Sigmoid colon (tissue), 7 donors: ENCODE measurements at regions of chr1 and their contacts with region 1.

Region 1: DNA sequence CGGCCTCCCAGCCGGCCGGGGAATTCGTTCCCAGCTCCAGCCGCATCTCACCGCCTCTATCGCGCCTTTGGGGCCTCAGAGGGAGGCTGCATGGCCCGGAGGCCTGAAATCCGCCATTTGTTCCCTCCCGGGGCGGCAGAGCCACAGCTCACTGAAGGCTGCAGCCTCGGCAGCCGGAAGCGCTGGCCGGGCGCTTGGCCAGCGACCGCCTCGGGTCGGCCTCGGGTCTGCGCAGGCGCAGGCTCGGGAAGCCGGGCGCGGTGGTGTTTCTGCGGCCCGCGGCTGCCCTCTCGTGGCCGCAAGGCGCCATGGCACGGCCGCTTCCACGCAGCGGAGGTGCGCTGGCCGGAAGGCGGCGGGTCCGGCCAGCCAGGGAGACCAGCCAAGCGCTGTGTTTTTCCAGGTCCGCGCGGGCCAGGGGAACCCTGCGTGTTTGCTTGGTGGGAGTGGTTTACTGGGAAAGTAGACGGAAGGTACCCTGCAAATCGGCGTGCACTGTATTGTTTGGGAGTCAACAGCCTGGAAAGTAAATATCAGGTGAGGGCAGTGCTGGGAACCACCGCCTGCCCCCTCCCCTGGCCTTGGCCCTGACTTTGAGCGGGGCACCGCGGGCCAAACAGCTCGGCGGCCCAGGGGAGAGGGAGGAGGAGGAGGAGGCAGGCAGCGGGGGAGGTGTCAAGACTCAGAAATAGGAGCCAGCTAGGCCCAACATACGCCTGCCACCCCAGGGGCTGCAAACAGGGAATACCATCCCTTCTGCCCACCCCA is 52.7 kb upstream of the CD34 start:
- DNase-seq: peak; percentile 94
- H3K4me3 ChIP-seq: peak overlapping the region; percentile 47 to 65 (median 60)
- H3K27ac ChIP-seq: peak overlapping the region; percentile 90 to 96 (median 93)
- H3K4me1 ChIP-seq: peaks cover 0 to 40% (median 34%) of the 10 kb centered on the region in 4 donors
- H3K27me3 ChIP-seq: no peaks in the 10 kb centered on the region
- CTCF ChIP-seq: peak; percentile 87 to 99 (median 94)
- EP300 ChIP-seq: peak in 2 of 4 donors; percentile 13 to 49
- POLR2A ChIP-seq: peak; percentile 81 to 82

Region 2: GRCh38 chr1:207052911-207053769 is 910.5 kb before region 1 on chr1 and contains the start of gene PFKFB2:
- intact Hi-C with region 1: loop called (anchors 5 kb)
- DNase-seq: peak; percentile 98
- H3K4me3 ChIP-seq: peak within 1 kb of the TSS; percentile 48 to 66 (median 59)
- H3K27ac ChIP-seq: peak within 1 kb of the TSS; percentile 87 to 95 (median 90)
- H3K4me1 ChIP-seq: peaks cover 0 to 32% (median 30%) of the 10 kb centered on the region in 4 donors
- H3K27me3 ChIP-seq: no peaks in the 10 kb centered on the region
- CTCF ChIP-seq: peak in 3 of 4 experiments; percentile 12 to 51 (median 42)
- EP300 ChIP-seq: no peak
- POLR2A ChIP-seq: peak; percentile 62 to 88
- total RNA-seq, gene PFKFB2: 5.0 to 7.8 (median 5.5) TPM

Region 3: DNA sequence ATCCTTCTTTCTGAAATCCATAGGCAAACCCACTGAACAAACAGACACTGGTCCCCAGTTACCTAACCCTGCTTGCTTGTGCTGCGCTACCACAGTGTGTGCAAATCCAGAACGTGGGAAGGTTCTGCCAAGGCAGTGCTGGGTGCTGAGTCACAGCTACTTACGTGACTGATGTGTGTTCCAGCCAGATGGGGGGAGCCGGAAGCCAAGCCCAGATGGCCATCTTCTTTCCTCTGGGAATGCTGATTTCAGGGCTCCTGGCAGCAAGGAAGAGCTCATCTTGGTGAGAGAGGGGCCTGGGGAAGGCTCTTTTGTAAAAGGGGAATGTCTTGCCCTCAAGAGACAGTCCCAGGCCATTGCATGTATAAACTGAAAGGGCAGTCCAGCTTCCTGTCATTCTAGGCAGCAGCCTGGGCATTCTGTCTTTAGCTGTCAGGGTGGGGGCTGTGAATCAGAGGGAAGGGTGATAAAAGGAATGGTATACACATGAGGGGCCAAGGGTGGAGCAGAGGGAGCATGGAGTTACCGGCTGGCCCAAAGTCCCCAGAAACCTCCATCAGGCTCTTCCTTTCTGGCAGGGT is 157.7 kb before region 1 on chr1:
- intact Hi-C with region 1: loop called (anchors 5 kb)
- DNase-seq: peak; percentile 96
- H3K4me3 ChIP-seq: no peak overlapping the region
- H3K27ac ChIP-seq: peak overlapping the region; percentile 77 to 99 (median 82)
- H3K4me1 ChIP-seq: peaks cover 0 to 76% (median 68%) of the 10 kb centered on the region in 4 donors
- H3K27me3 ChIP-seq: no peaks in the 10 kb centered on the region
- CTCF ChIP-seq: no peak
- EP300 ChIP-seq: peak in 1 of 4 donors; percentile 29
- POLR2A ChIP-seq: no peak

Region 4: GRCh38 chr1:207828485-207829158 is 135.0 kb before region 1 on chr1:
- intact Hi-C with region 1: loop called (anchors 2 kb)
- DNase-seq: peak; percentile 91
- H3K4me3 ChIP-seq: no peak overlapping the region
- H3K27ac ChIP-seq: peak overlapping the region; percentile 91 to 99 (median 94)
- H3K4me1 ChIP-seq: peaks cover 0 to 94% (median 88%) of the 10 kb centered on the region in 4 donors
- H3K27me3 ChIP-seq: no peaks in the 10 kb centered on the region
- CTCF ChIP-seq: peak; percentile 86 to 97 (median 92)
- EP300 ChIP-seq: no peak
- POLR2A ChIP-seq: no peak

Region 5: DNA sequence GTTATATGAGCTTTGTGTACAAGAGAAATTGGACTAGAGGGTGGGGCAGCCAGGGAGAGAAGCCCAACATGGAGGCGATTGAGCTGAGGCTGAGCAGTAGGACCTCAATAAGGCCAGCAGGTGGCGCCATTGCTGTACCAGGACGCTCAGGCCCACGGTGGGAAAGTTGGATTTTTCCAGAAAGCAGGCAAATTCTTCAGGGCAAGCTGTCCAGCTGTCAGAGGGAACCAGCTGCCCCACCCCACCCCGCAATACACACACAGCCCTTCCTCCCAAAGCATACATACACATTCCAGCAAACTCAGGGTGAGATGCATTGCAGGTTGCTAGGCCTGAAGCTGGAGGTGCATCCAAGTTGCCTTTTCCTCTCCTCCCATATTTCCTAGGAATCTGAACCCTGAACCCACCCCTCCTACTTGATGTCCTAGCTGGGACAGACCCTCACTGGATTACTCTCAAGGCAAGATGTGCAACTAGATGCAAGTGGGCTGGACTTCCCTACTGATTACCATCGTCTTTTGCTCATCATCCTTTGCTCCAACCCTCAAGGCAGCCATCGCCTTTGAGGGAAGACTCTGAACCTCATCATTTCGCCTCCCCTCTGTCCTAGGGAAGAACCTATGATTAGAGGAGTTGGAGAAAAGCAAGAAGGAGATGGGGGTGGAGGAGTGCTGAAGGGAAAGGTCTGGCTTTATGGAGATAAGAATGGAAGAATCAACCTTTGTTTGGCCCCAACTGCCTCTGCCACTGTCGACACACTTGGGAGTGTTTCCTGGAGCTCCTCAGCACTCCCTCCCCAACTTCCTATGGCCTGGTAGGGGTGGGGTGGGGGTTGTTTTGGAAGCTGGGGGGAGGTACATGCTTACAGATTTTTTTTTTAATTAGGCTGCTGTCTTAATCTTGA is 78.2 kb before region 1 on chr1:
- intact Hi-C with region 1: loop called (anchors 1 kb)
- DNase-seq: peak; percentile 93
- H3K4me3 ChIP-seq: no peak overlapping the region
- H3K27ac ChIP-seq: peak overlapping the region; percentile 28 to 60 (median 41)
- H3K4me1 ChIP-seq: peaks cover 0 to 55% (median 23%) of the 10 kb centered on the region in 4 donors
- H3K27me3 ChIP-seq: no peaks in the 10 kb centered on the region
- CTCF ChIP-seq: peak; percentile 91 to 97 (median 96)
- EP300 ChIP-seq: no peak
- POLR2A ChIP-seq: no peak

Region 6: DNA sequence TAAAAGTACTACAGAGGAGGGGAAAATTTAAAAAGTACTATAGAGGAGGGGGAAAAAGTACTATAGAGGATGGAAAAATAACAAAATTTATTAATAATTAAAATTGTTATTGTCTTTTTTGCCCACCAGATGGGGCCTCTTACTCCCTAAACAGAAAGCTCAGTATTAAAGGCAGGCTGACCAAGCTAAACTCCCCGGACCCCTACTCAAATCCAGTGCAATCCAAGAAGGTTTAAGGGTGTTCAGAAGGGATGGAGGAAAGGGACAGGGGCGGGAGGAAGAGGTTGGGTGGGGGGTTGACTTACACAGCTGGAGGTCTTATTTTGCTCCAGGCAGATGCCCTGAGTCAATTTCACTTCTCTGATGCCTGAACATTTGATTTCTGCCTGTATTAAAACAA is 66.4 kb before region 1 on chr1:
- intact Hi-C with region 1: loop called (anchors 2 kb)
- DNase-seq: no peak
- H3K4me3 ChIP-seq: no peak overlapping the region
- H3K27ac ChIP-seq: peak overlapping the region in 1 of 4 donors; percentile 27
- H3K4me1 ChIP-seq: peaks cover 0 to 2% (median 0%) of the 10 kb centered on the region in 4 donors
- H3K27me3 ChIP-seq: no peaks in the 10 kb centered on the region
- CTCF ChIP-seq: peak in 1 of 4 experiments; percentile 36
- EP300 ChIP-seq: no peak
- POLR2A ChIP-seq: no peak